H1 (cell line): ENCODE measurements at regions of chr10 and their contacts with region 1.

Region 1: GRCh38 chr10:98425511-98426352 is 10.8 kb upstream of the PYROXD2 start:
- DNase-seq: peak in 1 of 2 experiments; percentile 87
- H3K4me3 ChIP-seq: no peak overlapping the region
- H3K27ac ChIP-seq: no peak overlapping the region
- H3K4me1 ChIP-seq: no peaks in the 10 kb centered on the region
- H3K27me3 ChIP-seq: no peaks in the 10 kb centered on the region
- CTCF ChIP-seq: peak; percentile 77 to 100 (median 96)
- EP300 ChIP-seq: no peak
- POLR2A ChIP-seq: no peak
- RAD21 ChIP-seq: peak; percentile 82

Region 2: DNA sequence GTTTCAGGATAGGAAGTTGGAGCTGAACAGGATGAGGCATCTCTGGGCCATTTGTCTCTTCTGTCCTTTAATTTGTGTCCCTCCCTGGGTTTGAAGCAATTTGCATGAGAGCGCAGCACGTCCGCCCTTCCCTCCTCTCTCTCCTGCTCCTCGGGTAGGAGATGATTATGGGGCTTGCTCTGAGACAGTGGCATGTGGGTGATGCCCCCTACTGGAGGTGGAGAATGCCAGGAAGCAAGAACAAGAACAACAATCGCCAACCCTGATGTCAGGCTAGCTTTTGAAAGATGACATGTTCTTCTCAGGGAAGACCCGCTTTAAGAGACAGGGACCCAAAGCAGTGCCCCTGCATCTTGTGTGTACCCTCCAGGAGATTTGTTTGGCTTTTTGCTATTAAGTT is 93.8 kb before region 1 on chr10:
- CTCF ChIA-PET with region 1: interaction called, 10 read pairs
- POLR2A ChIA-PET with region 1: no interaction called
- DNase-seq: peak; percentile 46 to 59
- H3K4me3 ChIP-seq: no peak overlapping the region
- H3K27ac ChIP-seq: no peak overlapping the region
- H3K4me1 ChIP-seq: no peaks in the 10 kb centered on the region
- H3K27me3 ChIP-seq: no peaks in the 10 kb centered on the region
- CTCF ChIP-seq: peak; percentile 73 to 88 (median 80)
- EP300 ChIP-seq: no peak
- POLR2A ChIP-seq: no peak
- RAD21 ChIP-seq: peak; percentile 72 to 79

Region 3: DNA sequence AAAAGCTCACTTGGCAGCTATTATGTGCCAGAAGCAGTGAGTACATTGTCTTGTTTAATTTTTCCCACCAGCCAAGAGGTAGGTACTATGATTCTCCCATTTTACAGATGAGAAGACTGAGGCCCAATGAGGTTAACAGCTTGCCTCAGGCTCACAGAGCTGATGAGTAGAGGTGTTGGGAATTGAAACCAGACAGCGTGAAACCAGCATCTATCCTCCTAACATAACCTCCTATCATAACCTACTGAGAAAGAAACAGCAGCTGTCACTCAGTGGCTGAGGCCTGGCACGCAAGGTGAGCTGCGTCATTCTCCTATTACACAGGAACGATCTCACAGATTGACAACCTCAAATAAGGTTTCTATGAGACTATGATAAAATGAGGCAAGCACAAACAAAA is 16.9 kb before region 1 on chr10:
- CTCF ChIA-PET with region 1: interaction called, 69 read pairs
- POLR2A ChIA-PET with region 1: interaction called, 3 read pairs
- DNase-seq: no peak
- H3K4me3 ChIP-seq: no peak overlapping the region
- H3K27ac ChIP-seq: no peak overlapping the region
- H3K4me1 ChIP-seq: no peaks in the 10 kb centered on the region; a peak in 2 of 7 replicates
- H3K27me3 ChIP-seq: no peaks in the 10 kb centered on the region
- CTCF ChIP-seq: no peak
- EP300 ChIP-seq: no peak
- POLR2A ChIP-seq: no peak
- RAD21 ChIP-seq: no peak

Region 4: DNA sequence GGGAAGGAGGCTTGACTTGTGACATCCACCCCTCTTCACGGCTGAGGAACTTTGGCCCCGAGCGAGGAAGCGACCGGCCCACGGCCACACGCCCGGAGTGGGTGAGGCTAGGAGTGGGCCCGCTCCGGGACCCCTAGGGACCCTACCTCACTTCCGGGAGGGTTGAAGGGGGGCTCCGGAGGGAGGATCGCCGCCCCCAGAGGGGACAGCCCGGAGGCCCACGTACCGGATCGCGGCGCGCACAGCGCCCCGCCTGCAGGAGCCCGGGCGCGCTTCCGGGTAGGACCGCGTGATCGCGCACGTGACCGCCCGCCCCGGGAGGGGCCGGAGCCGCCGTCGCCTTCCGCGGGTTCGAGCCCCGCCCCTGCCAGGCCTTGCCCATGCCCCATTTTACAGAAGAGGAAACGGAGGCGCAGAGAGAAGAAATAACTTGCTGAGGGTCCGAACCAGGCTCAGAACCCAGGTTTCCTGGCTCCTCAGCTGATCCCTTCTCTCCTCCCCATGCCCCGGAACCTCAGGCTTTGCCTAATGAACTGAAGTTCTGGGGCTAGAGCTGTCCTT is 21.0 kb after region 1 on chr10 and contains the start of gene HPS1:
- CTCF ChIA-PET with region 1: interaction called, 10 read pairs
- POLR2A ChIA-PET with region 1: interaction called, 11 read pairs
- DNase-seq: peak in 1 of 2 experiments; percentile 86
- H3K4me3 ChIP-seq: peak within 1 kb of the TSS; percentile 70 to 93 (median 76)
- H3K27ac ChIP-seq: peak within 1 kb of the TSS; percentile 69; the same call in 1 of the 2 replicates
- H3K4me1 ChIP-seq: peaks cover 0 to 4% (median 3%) of the 10 kb centered on the region in 4 experiments; a peak in 5 of 7 replicates
- H3K27me3 ChIP-seq: no peaks in the 10 kb centered on the region
- CTCF ChIP-seq: no peak
- EP300 ChIP-seq: no peak
- POLR2A ChIP-seq: peak in 1 of 2 experiments; percentile 75; a peak in 2 of 3 replicates
- RAD21 ChIP-seq: no peak
- total RNA-seq, gene HPS1: 38.7 and 44.0 TPM in 2 replicates

Region 5: DNA sequence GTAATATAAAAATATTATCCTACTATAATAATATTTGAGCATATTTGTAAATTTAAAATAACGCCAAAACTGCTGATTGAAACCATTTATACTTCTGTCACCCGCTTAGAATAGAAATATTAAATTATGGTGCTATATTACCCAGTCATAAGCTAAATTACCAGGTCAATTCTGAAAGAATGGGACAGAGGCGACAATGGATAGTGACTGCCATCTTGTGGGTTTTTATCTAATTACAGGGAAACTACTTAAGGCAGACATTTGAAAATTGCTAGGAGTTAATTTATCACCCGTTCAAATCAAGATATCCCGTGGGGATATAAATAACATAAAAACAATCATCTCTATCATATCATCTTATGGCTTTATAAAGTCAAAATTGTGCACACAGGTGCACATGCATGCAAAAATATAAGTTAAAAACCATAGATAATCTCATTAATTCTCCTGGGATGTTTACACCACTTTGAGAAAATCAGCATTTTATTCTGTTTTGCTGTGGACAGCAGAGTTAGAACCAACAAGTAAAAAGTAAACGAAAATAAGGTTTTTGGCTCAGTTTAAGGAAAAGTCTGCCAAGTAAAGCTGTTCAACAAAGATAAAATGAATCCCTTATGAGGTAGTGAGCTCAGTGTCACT is 851.2 kb after region 1 on chr10:
- CTCF ChIA-PET with region 1: interaction called, 12 read pairs
- POLR2A ChIA-PET with region 1: no interaction called
- DNase-seq: no peak
- H3K4me3 ChIP-seq: no peak overlapping the region
- H3K27ac ChIP-seq: no peak overlapping the region
- H3K4me1 ChIP-seq: no peaks in the 10 kb centered on the region
- H3K27me3 ChIP-seq: peaks cover 0 to 1% (median 0%) of the 10 kb centered on the region in 4 experiments; a peak in 1 of 7 replicates
- CTCF ChIP-seq: peak in 2 of 3 experiments; percentile 45 to 46; a peak in 2 of 4 replicates
- EP300 ChIP-seq: no peak
- POLR2A ChIP-seq: no peak
- RAD21 ChIP-seq: peak; percentile 86 to 88